Naive thymus-derived CD4-positive, alpha-beta T cell (primary cell): ENCODE measurements at regions of chr10 and their contacts with region 1.

Region 1: GRCh38 chr10:68600041-68600778 is 40.1 kb downstream of the TET1 start:
- DNase-seq: peak; percentile 16 to 67 (median 52)
- ATAC-seq: peak; percentile 89
- H3K4me3 ChIP-seq: peak overlapping the region; percentile 78
- H3K4me3 Mint-ChIP-seq: peak overlapping the region; percentile 83 to 96 (median 92)
- H3K27ac ChIP-seq: peak overlapping the region; percentile 56
- H3K27ac Mint-ChIP-seq: peak overlapping the region; percentile 82 to 94 (median 89)
- H3K4me1 ChIP-seq: peaks cover 16 to 20% of the 10 kb centered on the region in 2 donors
- H3K4me1 Mint-ChIP-seq: peaks cover 23 to 53% (median 46%) of the 10 kb centered on the region in 7 donors
- H3K27me3 ChIP-seq: no peaks in the 10 kb centered on the region
- H3K27me3 Mint-ChIP-seq: no peaks in the 10 kb centered on the region

Region 2: GRCh38 chr10:68526626-68527307 is 73.4 kb before region 1 on chr10:
- CTCF ChIA-PET with region 1: no interaction called
- POLR2A ChIA-PET with region 1: no interaction called
- intact Hi-C with region 1: loop called in 1 of 2 experiments (anchors 1 kb)
- DNase-seq: peak in 1 of 9 donors; percentile 4
- ATAC-seq: no peak
- H3K4me3 ChIP-seq: peak overlapping the region; percentile 91
- H3K4me3 Mint-ChIP-seq: peak overlapping the region; percentile 87 to 94 (median 92)
- H3K27ac ChIP-seq: peak overlapping the region; percentile 96
- H3K27ac Mint-ChIP-seq: peak overlapping the region; percentile 78 to 97 (median 95)
- H3K4me1 ChIP-seq: peaks cover 0 to 5% of the 10 kb centered on the region in 2 donors
- H3K4me1 Mint-ChIP-seq: peaks cover 0 to 20% (median 7%) of the 10 kb centered on the region in 7 donors
- H3K27me3 ChIP-seq: no peaks in the 10 kb centered on the region
- H3K27me3 Mint-ChIP-seq: no peaks in the 10 kb centered on the region

Region 3: GRCh38 chr10:68550747-68551411 is 49.3 kb before region 1 on chr10:
- CTCF ChIA-PET with region 1: no interaction called
- POLR2A ChIA-PET with region 1: no interaction called
- intact Hi-C with region 1: loop called in 1 of 2 experiments (anchors 2 kb)
- DNase-seq: peak in 8 of 9 donors; percentile 18 to 55 (median 42)
- ATAC-seq: peak; percentile 83
- H3K4me3 ChIP-seq: no peak overlapping the region
- H3K4me3 Mint-ChIP-seq: no peak overlapping the region
- H3K27ac ChIP-seq: no peak overlapping the region
- H3K27ac Mint-ChIP-seq: peak overlapping the region in 1 of 9 donors; percentile 3
- H3K4me1 ChIP-seq: no peaks in the 10 kb centered on the region
- H3K4me1 Mint-ChIP-seq: peaks cover 0 to 5% (median 0%) of the 10 kb centered on the region in 7 donors
- H3K27me3 ChIP-seq: no peaks in the 10 kb centered on the region
- H3K27me3 Mint-ChIP-seq: peaks cover 0 to 6% (median 0%) of the 10 kb centered on the region in 5 donors

Region 4: GRCh38 chr10:68560186-68560942 is 39.8 kb before region 1 on chr10 and contains the start of gene TET1:
- CTCF ChIA-PET with region 1: no interaction called
- POLR2A ChIA-PET with region 1: no interaction called
- intact Hi-C with region 1: loop called (anchors 1 kb)
- DNase-seq: peak in 6 of 9 donors; percentile 9 to 30 (median 10)
- ATAC-seq: peak; percentile 34
- H3K4me3 ChIP-seq: peak within 1 kb of the TSS; percentile 41
- H3K4me3 Mint-ChIP-seq: peak within 1 kb of the TSS; percentile 65 to 90 (median 76)
- H3K27ac ChIP-seq: no peak within 1 kb of the TSS
- H3K27ac Mint-ChIP-seq: peak within 1 kb of the TSS in 1 of 9 donors; percentile 32
- H3K4me1 ChIP-seq: peaks cover 5 to 14% of the 10 kb centered on the region in 2 donors
- H3K4me1 Mint-ChIP-seq: peaks cover 16 to 33% (median 25%) of the 10 kb centered on the region in 7 donors
- H3K27me3 ChIP-seq: peaks cover 4 to 14% of the 10 kb centered on the region in 2 donors
- H3K27me3 Mint-ChIP-seq: peaks cover 52 to 73% (median 65%) of the 10 kb centered on the region in 5 donors
- total RNA-seq, gene TET1: 2.5 to 3.0 (median 2.9) TPM

Region 5: DNA sequence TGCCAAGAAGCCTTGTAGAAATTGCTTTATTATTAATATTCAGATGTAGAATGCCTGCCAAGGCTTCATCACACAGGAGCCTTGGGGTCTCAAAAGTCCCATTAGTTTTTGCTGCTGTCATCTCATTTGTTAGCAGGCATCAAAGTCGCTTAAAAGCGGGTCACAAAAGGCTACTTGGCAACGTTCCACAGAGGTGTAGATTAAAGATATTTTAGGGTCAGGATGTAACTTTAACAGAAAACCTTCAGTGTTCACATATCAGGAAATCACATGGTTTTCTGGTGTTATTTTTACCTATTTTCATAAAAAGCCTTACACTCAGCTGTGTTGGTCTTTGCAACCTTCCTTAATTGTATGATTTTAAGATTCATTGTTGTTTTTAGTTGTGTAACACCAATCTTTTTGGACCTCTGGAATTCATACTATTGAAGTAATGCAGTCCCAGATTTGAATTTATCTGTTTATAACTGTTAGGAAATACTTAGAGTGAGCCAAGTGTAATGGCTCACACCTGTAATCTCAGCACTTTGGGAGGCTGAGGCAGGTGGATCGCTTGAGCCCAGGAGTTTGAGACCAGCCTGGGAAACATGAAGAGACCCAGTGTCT is 25.2 kb after region 1 on chr10:
- CTCF ChIA-PET with region 1: no interaction called
- POLR2A ChIA-PET with region 1: no interaction called
- intact Hi-C with region 1: loop called in 1 of 2 experiments (anchors 1 kb)
- DNase-seq: peak in 2 of 9 donors; percentile 7 to 11
- ATAC-seq: no peak
- H3K4me3 ChIP-seq: no peak overlapping the region
- H3K4me3 Mint-ChIP-seq: peak overlapping the region in 9 of 10 donors; percentile 11 to 69 (median 55)
- H3K27ac ChIP-seq: peak overlapping the region; percentile 18
- H3K27ac Mint-ChIP-seq: peak overlapping the region in 8 of 9 donors; percentile 40 to 90 (median 74)
- H3K4me1 ChIP-seq: peaks cover 19 to 20% of the 10 kb centered on the region in 2 donors
- H3K4me1 Mint-ChIP-seq: peaks cover 12 to 47% (median 35%) of the 10 kb centered on the region in 7 donors
- H3K27me3 ChIP-seq: no peaks in the 10 kb centered on the region
- H3K27me3 Mint-ChIP-seq: peaks cover 0 to 5% (median 0%) of the 10 kb centered on the region in 5 donors